B cell (primary cell): ENCODE measurements at regions of chr18 and their contacts with region 1.

Region 1: GRCh38 chr18:830315-830901 is 18.4 kb upstream of the YES1 start:
- DNase-seq: peak; percentile 22
- ATAC-seq: no peak
- H3K4me3 ChIP-seq: no peak overlapping the region
- H3K4me3 Mint-ChIP-seq: peak overlapping the region; percentile 8
- H3K27ac ChIP-seq: no peak overlapping the region
- H3K27ac Mint-ChIP-seq: no peak overlapping the region
- H3K4me1 ChIP-seq: peaks cover 6 to 8% of the 10 kb centered on the region in 2 donors
- H3K4me1 Mint-ChIP-seq: peaks cover 11% of the 10 kb centered on the region
- H3K27me3 ChIP-seq: peaks cover 0 to 8% (median 0%) of the 10 kb centered on the region in 4 experiments
- H3K27me3 Mint-ChIP-seq: peaks cover 23% of the 10 kb centered on the region
- CTCF ChIP-seq: no peak

Region 2: DNA sequence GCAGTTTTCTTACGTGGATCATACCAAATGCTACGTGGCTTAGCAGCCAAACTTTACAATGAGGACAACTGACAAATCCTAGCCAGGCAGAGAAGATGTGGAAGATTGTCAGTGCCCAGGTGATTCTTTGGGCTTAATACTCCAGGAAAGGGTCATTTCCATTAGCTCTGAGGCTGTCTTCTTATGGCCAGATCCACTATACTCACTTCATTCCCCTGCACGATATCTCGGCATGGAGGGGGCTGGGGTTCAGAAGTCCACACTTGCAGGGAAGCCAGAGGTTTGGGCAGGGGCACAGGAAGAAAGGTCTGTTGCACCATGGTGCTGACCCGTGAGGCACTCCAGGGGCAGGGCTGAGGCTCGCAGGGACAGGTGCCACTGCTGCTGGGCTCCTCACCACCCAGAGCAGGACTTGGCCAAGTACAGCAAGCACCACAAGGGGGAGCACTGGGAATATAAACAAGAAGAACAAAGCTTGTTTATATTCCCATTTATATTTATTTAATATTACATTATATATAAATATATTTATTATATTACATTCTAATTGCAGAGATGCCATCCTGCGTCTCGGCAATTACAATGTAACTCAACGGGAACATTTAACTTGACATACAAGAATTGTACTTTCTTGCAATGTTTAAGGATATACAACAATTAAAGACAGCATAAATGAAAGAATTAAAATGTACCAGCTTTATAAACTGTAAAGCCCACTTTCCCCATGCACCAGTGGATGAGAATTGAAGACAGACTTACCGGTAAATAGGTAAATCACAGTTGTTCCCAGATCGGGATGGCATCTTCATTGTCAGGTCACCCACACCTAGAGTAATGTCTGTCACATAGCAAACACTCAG is 206.4 kb before region 1 on chr18:
- CTCF ChIA-PET with region 1: interaction called, 44 read pairs
- POLR2A ChIA-PET with region 1: no interaction called
- intact Hi-C with region 1: no loop called
- DNase-seq: peak; percentile 52
- ATAC-seq: peak; percentile 49
- H3K4me3 ChIP-seq: no peak overlapping the region
- H3K4me3 Mint-ChIP-seq: no peak overlapping the region
- H3K27ac ChIP-seq: no peak overlapping the region
- H3K27ac Mint-ChIP-seq: no peak overlapping the region
- H3K4me1 ChIP-seq: no peaks in the 10 kb centered on the region
- H3K4me1 Mint-ChIP-seq: no peaks in the 10 kb centered on the region
- H3K27me3 ChIP-seq: peaks cover 0 to 2% (median 0%) of the 10 kb centered on the region in 4 experiments
- H3K27me3 Mint-ChIP-seq: peaks cover 24% of the 10 kb centered on the region
- CTCF ChIP-seq: peak; percentile 70

Region 3: DNA sequence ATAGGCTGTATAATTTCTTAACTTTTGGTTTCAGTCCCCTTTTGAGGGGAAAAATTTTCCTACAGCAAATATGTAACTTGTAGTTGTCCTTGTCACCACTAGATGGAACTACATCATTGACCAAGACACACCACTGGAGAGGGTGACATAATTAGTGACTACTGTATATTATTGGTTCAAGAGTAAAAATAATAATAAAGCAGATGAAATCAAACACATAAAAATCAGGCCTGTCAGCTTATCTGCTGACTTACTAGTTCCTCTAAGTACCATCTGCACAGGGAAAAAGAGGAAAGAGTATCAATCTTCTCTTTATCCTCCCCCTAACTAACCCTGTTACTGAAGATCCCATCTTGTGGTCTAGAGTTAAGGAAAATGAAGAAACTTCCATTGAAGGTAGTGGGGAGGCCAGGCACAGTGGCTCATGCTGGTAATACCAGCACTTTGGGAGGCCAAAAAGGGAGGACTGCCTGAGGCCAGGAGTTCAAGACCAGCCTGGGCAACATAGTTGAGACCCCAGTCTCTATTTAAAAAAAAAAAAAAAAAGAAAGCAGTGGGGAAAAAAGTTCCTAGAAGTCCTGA is 88.4 kb before region 1 on chr18:
- CTCF ChIA-PET with region 1: interaction called, 16 read pairs
- POLR2A ChIA-PET with region 1: no interaction called
- intact Hi-C with region 1: loop called (anchors 1 kb)
- DNase-seq: peak; percentile 41
- ATAC-seq: peak; percentile 60
- H3K4me3 ChIP-seq: no peak overlapping the region
- H3K4me3 Mint-ChIP-seq: no peak overlapping the region
- H3K27ac ChIP-seq: no peak overlapping the region
- H3K27ac Mint-ChIP-seq: no peak overlapping the region
- H3K4me1 ChIP-seq: no peaks in the 10 kb centered on the region
- H3K4me1 Mint-ChIP-seq: no peaks in the 10 kb centered on the region
- H3K27me3 ChIP-seq: no peaks in the 10 kb centered on the region
- H3K27me3 Mint-ChIP-seq: peaks cover 2% of the 10 kb centered on the region
- CTCF ChIP-seq: peak; percentile 83

Region 4: DNA sequence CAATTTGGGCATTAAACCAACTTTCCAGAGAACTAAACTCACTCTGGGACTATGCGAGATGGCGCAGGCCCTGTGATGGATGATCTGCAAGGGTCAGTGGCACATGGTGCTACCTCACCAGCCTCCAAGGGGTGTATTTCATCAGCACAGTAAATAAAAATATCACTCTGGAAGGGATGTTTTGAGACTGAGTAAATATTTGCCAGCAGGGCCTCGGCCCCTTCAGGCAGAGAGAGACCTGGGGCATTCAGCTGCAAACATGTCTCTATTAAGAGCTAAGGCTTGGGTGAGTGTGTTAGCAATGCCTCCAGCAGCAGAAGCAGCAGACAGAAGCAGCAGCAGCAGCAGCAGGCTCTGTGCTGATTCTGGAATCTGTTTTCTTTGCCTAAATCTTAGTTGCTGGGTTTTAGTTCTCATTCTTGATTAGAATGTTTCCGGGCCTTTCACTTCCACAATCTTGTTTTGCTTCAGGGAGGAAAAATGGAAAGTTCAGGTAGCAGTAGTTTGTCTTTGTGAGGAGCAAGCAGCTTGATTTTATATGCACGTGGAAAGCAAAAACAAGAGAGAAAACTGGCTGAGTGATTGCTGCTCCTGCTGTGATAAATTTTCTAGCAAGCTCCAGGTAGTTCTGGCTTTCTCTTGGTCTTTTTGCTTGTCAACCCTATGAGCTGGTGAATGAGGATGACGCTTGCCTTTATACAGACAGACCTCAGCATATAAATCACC is 92.9 kb after region 1 on chr18:
- CTCF ChIA-PET with region 1: no interaction called
- POLR2A ChIA-PET with region 1: no interaction called
- intact Hi-C with region 1: no loop called
- DNase-seq: no peak
- ATAC-seq: no peak
- H3K4me3 ChIP-seq: no peak overlapping the region
- H3K4me3 Mint-ChIP-seq: no peak overlapping the region
- H3K27ac ChIP-seq: no peak overlapping the region
- H3K27ac Mint-ChIP-seq: no peak overlapping the region
- H3K4me1 ChIP-seq: no peaks in the 10 kb centered on the region
- H3K4me1 Mint-ChIP-seq: no peaks in the 10 kb centered on the region
- H3K27me3 ChIP-seq: peaks cover 0 to 4% (median 1%) of the 10 kb centered on the region in 4 experiments
- H3K27me3 Mint-ChIP-seq: peaks cover 20% of the 10 kb centered on the region
- CTCF ChIP-seq: no peak